ENCODE measurements at regions of chr4 and their contacts with region 1.

Region 1: DNA sequence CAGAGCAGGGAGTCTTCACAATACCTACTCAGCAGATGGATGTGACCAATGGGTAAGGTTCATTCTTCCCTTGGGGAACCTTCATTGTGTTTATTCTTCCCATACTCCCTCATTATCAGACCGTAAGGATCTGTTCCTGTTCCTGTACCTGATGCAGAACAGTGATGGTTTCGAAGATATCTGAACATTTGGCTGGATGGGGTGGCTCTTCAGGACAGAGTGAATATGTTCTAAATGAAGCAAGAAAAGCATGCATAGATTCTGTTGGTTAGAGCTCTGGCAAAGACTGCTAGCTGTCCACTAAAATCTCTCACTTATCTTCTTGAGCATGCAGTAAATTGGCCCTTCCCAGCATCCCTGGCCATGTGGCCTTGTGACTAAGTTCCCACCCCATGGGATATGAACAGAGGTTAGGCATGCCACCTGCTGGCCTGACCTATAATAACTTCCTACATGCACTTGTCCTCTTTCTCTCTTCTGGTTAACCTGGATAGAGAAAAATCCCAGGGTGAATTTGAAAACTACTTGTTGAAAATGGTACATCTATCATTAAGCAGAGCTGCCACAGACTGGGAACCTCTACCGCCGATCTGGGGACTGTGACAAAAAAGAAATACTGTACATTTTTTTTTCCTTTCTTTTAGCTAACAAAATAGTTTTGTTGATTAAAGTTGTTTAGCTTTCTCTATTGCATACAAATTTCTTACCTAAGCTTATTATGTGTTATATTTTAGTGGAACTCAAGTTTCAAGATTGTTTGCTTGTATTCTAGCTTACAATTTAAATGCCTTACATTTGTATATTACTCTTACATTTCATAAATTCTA is 60.0 kb upstream of the BANK1 start:
- DNase-seq: peak; percentile 51 to 73
- ATAC-seq: peak; percentile 98

Region 2: DNA sequence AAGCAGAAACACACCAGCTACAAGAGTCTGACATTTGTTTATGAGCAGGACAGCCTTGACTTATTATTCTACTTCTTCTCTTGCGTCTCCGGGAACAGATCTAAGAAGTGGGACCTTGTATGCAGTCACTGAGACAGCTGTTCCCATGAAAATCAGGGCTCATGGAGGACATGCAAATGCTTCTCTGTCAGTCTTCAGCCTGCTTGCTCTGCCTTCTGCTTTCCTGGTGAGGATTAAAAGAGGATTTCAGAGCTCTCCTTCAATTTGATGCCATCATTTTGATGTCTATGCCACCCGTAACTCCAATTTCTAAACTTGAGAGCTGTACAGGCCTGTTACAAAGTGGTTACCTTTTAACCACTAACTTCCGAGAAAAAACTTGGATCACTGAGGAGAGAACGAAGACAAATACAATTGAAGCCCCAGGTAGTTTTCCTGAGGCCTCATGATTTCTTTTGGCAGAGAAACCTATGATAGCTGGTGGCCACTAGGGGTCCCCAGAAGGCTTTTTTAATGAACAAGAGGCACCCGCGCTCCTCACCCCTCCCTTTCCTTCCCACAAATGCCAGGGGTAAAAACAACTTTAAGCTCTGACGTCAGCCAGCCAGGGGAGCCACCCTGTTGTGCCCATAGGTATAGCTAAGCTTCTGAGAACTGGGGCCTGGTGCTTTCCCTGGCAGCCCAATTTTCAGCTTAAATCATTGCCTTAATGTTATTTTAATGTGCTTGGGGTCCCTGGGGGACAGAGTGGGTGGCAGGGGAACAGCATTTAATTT is 1637.2 kb before region 1 on chr4:
- intact Hi-C with region 1: loop called in 1 of 2 experiments (anchors 5 kb)
- DNase-seq: peak; percentile 69 to 75
- ATAC-seq: peak; percentile 82

Region 3: DNA sequence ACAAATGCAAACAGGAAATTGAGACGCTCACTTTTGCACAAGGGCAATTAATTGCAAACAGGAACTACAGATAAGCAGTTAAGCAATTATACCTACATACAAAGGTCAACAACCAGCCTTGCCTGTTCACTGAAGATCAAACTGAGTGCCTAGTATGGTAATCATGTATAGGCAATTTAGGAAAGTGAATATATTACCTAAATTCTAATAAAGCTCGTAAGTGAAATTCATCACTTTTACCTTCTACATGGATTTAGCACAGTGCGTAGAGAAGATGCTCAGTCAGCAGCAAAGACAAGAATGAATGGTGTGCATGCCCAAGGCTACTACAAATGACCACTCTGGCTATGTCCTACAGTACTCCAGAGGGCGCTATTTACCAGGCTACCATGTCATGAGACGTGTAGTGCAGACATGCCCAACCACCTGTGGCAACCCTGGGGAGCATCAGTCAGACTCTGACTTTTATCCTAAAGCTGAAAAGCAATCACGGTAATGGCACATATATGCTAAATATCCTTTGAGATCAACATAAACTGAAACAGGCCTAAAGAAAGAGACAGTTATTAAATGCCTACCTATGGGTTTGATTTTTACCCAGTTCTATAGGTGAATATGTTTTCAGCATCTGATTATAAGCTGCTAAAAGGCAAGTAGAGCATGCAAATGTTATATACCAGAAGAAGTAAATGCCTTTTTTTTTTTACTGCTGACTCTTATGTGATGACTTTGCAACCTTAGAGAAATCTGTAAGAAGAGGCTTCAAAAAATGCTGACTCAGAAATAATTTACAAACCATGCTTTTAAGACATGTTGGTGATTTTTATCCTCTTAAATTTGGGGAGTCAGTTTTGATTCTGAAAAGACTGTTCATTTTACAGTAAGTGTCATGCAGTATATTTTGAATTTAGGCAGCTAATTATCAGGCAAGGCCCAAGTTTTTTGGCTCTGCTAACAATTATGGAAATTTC is 561.2 kb before region 1 on chr4:
- intact Hi-C with region 1: loop called in 1 of 2 experiments (anchors 5 kb)
- DNase-seq: peak; percentile 62 to 64
- ATAC-seq: peak; percentile 99